ENCODE measurements at regions of chr3 and their contacts with region 1.

Region 1: DNA sequence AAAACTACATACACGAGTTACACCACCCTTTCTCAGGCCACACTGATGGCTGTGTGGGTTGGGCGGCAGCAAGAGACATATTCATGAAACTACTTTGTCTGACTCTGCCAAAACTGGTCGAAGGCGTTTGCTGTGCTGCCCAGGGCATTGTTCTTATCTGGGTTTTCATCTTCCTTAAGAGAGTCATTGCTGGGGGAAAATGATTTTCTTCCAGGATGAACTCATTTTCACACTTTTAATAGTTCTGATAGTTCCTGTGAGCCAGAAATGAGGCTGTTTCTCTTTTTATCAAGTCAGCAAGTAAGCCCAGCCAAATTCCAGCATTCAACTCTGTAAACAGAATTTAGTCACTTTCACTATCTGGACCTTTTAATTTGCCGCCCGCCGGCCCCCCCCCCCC is 47.6 kb downstream of the TRIM71 start:
- DNase-seq: peak; percentile 32
- ATAC-seq: peak; percentile 48
- H3K4me3 ChIP-seq: no peak overlapping the region
- H3K27ac ChIP-seq: peak overlapping the region; percentile 53
- H3K4me1 ChIP-seq: peaks cover 100% of the 10 kb centered on the region
- H3K27me3 ChIP-seq: no peaks in the 10 kb centered on the region
- CTCF ChIP-seq: no peak
- EP300 ChIP-seq: no peak
- POLR2A ChIP-seq: no peak
- RAD21 ChIP-seq: no peak

Region 2: GRCh38 chr3:32848215-32848614 is 17.2 kb before region 1 on chr3:
- CTCF ChIA-PET with region 1: no interaction called
- POLR2A ChIA-PET with region 1: no interaction called
- in situ Hi-C with region 1: no loop called
- intact Hi-C with region 1: loop called (anchors 2 kb)
- DNase-seq: no peak
- ATAC-seq: no peak
- H3K4me3 ChIP-seq: peak overlapping the region in 1 of 3 experiments; percentile 36; a peak in 1 of 6 replicates
- H3K27ac ChIP-seq: peak overlapping the region; percentile 71
- H3K4me1 ChIP-seq: peaks cover 100% of the 10 kb centered on the region
- H3K27me3 ChIP-seq: no peaks in the 10 kb centered on the region
- CTCF ChIP-seq: no peak
- EP300 ChIP-seq: no peak
- POLR2A ChIP-seq: 0 out of 4 replicates have a peak, but pooled peaks of 1 of the 2 experiments have one; percentile 12
- RAD21 ChIP-seq: no peak

Measured in HepG2 (cell line).